ENCODE measurements at regions of chrX and their contacts with region 1.

Region 1: GRCh38 chrX:47482512-47483309 is at the start of gene ZNF41:
- DNase-seq: peak; percentile 86
- ATAC-seq: peak; percentile 90
- H3K4me3 Mint-ChIP-seq: peak within 1 kb of the TSS; percentile 97
- H3K27ac Mint-ChIP-seq: peak within 1 kb of the TSS; percentile 94
- H3K4me1 Mint-ChIP-seq: peaks cover 41% of the 10 kb centered on the region
- H3K27me3 Mint-ChIP-seq: no peaks in the 10 kb centered on the region
- total RNA-seq, gene ZNF41: 9.3 to 10.9 TPM

Region 2: DNA sequence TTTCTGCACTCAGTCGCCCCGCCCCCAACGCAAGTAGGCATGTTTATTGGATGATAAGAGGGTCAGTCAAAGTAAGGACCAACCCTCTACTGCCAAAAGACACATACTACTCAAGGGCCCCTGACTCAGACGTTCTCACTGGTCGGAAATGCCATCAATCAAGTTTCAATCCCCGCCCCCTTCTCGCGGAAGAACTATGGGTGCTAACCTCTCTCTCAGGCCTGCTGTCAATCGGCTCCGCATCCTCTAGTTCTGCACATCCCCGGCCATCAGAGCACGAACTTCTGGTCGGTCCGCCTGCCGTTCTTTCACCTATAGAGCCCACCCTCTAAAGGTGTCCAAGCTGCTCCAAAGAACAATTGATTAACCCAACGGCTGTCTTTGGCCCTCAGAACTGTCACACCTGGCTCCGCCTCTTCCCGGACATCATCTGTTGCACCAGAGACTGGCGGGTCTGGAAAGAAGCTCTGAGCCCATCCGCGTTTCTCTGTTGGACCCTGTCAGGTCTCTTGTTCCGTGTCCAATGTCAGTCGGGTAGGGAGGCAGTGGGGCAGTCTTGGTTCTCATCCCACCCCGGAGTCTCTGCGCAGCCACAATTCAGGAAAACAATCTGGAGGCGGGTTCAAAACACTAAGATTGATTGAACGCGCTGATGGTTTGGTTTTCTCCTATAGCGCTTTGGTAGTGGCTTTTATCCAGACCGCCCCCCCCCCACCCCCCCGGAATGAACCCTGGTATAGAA is 353.4 kb before region 1 on chrX:
- CTCF ChIA-PET with region 1: no interaction called
- POLR2A ChIA-PET with region 1: no interaction called
- intact Hi-C with region 1: loop called in 1 of 2 experiments (anchors 1 kb)
- DNase-seq: peak; percentile 91
- ATAC-seq: peak; percentile 100
- H3K4me3 Mint-ChIP-seq: peak overlapping the region; percentile 89
- H3K27ac Mint-ChIP-seq: peak overlapping the region; percentile 99
- H3K4me1 Mint-ChIP-seq: peaks cover 6% of the 10 kb centered on the region
- H3K27me3 Mint-ChIP-seq: no peaks in the 10 kb centered on the region

Region 3: GRCh38 chrX:47144626-47145394 is 337.9 kb before region 1 on chrX and contains the starts of genes NDUFB11 and RBM10:
- CTCF ChIA-PET with region 1: interaction called, 3 read pairs
- POLR2A ChIA-PET with region 1: no interaction called
- intact Hi-C with region 1: loop called in 1 of 2 experiments (anchors 1 kb)
- DNase-seq: peak; percentile 94
- ATAC-seq: peak; percentile 93
- H3K4me3 Mint-ChIP-seq: peak within 1 kb of the TSS; percentile 98
- H3K27ac Mint-ChIP-seq: peak within 1 kb of the TSS; percentile 100
- H3K4me1 Mint-ChIP-seq: peaks cover 24% of the 10 kb centered on the region
- H3K27me3 Mint-ChIP-seq: no peaks in the 10 kb centered on the region
- total RNA-seq, gene NDUFB11: 89.9 to 90.8 TPM
- total RNA-seq, gene RBM10: 63.8 to 72.1 TPM

Region 4: GRCh38 chrX:47233337-47234113 is 249.2 kb before region 1 on chrX:
- CTCF ChIA-PET with region 1: no interaction called
- POLR2A ChIA-PET with region 1: no interaction called
- intact Hi-C with region 1: loop called in 1 of 2 experiments (anchors 1 kb)
- DNase-seq: peak; percentile 96
- ATAC-seq: peak; percentile 89
- H3K4me3 Mint-ChIP-seq: peak overlapping the region; percentile 77
- H3K27ac Mint-ChIP-seq: peak overlapping the region; percentile 95
- H3K4me1 Mint-ChIP-seq: peaks cover 23% of the 10 kb centered on the region
- H3K27me3 Mint-ChIP-seq: no peaks in the 10 kb centered on the region

Region 5: DNA sequence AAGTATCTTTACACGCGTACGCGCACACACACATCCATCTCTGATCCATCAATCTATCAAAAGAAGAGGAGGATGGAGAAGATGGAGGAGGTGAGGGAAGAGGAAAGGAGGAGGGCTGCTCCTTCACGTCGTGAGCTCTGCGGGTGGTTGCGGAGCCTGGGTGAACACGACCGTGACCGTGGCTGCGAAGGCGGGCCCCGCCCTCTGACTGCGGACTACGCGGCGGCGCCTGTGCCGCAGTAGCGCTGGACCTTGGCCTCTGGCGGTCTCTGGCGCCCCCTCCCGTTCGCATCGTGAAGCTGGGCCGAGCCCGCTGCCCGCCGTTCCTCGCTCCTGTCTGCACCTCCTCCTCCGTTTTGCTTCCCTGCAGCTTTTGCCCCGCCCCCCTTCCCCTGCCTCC is 40.6 kb after region 1 on chrX:
- CTCF ChIA-PET with region 1: interaction called, 3 read pairs
- POLR2A ChIA-PET with region 1: no interaction called
- intact Hi-C with region 1: loop called (anchors 1 kb)
- DNase-seq: peak; percentile 88
- ATAC-seq: peak; percentile 99
- H3K4me3 Mint-ChIP-seq: peak overlapping the region; percentile 60
- H3K27ac Mint-ChIP-seq: no peak overlapping the region
- H3K4me1 Mint-ChIP-seq: no peaks in the 10 kb centered on the region
- H3K27me3 Mint-ChIP-seq: no peaks in the 10 kb centered on the region

Region 6: GRCh38 chrX:47706575-47706974 is 223.9 kb after region 1 on chrX:
- CTCF ChIA-PET with region 1: no interaction called
- POLR2A ChIA-PET with region 1: no interaction called
- intact Hi-C with region 1: no loop called
- DNase-seq: no peak
- ATAC-seq: no peak
- H3K4me3 Mint-ChIP-seq: no peak overlapping the region
- H3K27ac Mint-ChIP-seq: no peak overlapping the region
- H3K4me1 Mint-ChIP-seq: no peaks in the 10 kb centered on the region
- H3K27me3 Mint-ChIP-seq: peaks cover 5% of the 10 kb centered on the region

Region 7: DNA sequence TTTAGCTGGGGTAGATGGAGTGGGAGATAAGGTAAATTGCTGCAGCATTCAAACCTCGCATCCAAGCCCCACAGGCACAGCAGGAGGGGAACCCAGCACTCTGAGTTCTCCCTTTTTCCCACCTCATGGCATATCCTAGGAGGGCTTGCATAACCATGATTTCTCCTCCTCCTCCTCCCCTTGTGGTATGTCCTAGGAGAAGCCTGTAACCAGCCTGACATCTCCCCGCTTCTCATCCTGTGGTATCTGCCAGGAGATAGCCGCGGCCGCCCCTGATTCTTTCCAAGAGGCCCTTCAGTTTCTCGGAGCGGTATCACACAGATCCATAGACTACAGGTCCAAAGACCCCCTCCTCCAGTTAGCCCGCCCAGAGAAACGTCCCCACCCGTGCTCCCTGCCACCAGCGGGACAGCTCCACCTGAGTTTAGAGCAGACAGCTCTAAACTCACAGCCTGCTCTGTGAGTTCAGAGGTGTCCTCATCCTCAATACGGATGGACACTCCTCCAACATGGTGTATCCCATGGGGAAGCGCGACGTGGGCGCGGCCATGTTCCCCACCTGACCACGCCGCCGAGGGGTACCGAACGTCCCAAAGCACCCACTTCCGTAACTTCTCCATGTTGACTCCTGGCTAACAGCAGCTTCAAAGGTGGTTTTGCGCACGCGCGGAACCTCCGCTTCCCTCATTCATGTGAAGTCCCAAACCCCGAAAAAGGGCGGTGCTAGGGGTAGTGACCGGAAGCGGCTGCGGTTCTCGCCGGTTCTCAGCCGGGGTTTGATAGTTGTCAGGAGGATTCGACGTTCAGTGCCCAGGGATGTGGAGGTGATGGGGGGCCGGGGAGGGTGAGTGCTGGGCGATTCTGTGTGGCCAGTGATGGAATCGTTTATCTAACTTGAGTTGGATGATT is 353.7 kb after region 1 on chrX and contains the start of gene ZNF81:
- CTCF ChIA-PET with region 1: no interaction called
- POLR2A ChIA-PET with region 1: no interaction called
- intact Hi-C with region 1: loop called in 1 of 2 experiments (anchors 5 kb)
- DNase-seq: peak; percentile 93
- ATAC-seq: peak; percentile 92
- H3K4me3 Mint-ChIP-seq: peak within 1 kb of the TSS; percentile 95
- H3K27ac Mint-ChIP-seq: peak within 1 kb of the TSS; percentile 97
- H3K4me1 Mint-ChIP-seq: peaks cover 23% of the 10 kb centered on the region
- H3K27me3 Mint-ChIP-seq: no peaks in the 10 kb centered on the region
- total RNA-seq, gene ZNF81: 5.3 to 6.4 TPM

Region 8: DNA sequence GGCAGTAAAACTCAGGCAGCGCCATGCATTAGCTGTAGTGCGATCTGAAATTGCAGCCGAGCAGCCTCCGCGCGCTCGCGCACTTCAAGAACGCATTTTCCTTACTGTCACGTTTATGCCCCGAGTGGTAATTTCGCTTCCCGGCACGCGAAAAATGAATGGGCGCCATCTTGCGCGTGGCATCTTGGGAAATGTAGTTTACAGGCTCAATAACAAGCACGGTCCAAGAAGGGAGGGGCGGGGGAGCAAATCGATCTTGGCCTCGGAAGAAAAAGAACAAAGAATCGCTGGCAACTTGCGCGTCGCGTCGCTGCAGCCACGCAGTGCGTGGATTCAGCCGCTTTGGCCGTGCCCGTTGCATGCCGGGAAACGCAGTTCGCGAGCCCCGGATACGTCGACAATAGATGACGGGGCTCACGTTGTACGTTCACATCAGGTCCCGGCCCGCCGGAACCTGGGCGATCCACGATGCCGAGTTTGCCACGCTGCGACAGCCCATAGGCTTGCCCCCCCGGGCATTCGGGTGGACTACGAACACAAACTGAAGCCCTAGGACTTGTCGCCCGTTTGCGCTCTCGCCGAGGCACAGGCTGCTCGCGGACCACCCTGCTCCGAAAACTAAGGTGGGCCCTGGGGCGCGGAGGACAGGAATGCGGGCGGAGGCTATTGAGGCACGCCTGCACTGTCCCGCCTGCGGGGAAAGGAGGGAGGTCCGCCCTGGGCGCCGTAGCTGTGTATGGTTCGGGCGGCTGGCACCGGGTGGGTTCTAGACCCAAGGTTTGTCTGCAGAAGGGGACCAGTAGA is 993.3 kb after region 1 on chrX and contains the start of gene FTSJ1:
- CTCF ChIA-PET with region 1: no interaction called
- POLR2A ChIA-PET with region 1: no interaction called
- intact Hi-C with region 1: loop called in 1 of 2 experiments (anchors 5 kb)
- DNase-seq: peak; percentile 88
- ATAC-seq: peak; percentile 91
- H3K4me3 Mint-ChIP-seq: peak within 1 kb of the TSS; percentile 93
- H3K27ac Mint-ChIP-seq: peak within 1 kb of the TSS; percentile 90
- H3K4me1 Mint-ChIP-seq: peaks cover 36% of the 10 kb centered on the region
- H3K27me3 Mint-ChIP-seq: no peaks in the 10 kb centered on the region
- total RNA-seq, gene FTSJ1: 73.0 to 93.7 TPM